Posterior vena cava (tissue), 2 donors: ENCODE measurements at regions of chr14 and their contacts with region 1.

Region 1: GRCh38 chr14:65824285-65824977 is 411.9 kb downstream of the FUT8 start:
- DNase-seq: no peak

Region 2: GRCh38 chr14:65412032-65412846 is 412.2 kb before region 1 on chr14 and contains the start of gene FUT8:
- intact Hi-C with region 1: loop called in 1 of 2 experiments (anchors 5 kb)
- DNase-seq: peak; percentile 99
- total RNA-seq, gene FUT8: 26.0 to 35.9 TPM